ENCODE measurements at regions of chr22 and their contacts with region 1.

Region 1: GRCh38 chr22:37538590-37539357 is 19.6 kb upstream of the CARD10 start:
- DNase-seq: peak; percentile 92
- ATAC-seq: peak; percentile 99
- H3K4me3 ChIP-seq: no peak overlapping the region
- H3K27ac ChIP-seq: no peak overlapping the region
- H3K4me1 ChIP-seq: peaks cover 5% of the 10 kb centered on the region
- H3K27me3 ChIP-seq: no peaks in the 10 kb centered on the region
- CTCF ChIP-seq: peak; percentile 99
- POLR2A ChIP-seq: peak; percentile 66
- RAD21 ChIP-seq: peak; percentile 100

Region 2: GRCh38 chr22:37316875-37317371 is 221.9 kb before region 1 on chr22:
- CTCF ChIA-PET with region 1: no interaction called
- POLR2A ChIA-PET with region 1: no interaction called
- dilution Hi-C with region 1: no loop called
- in situ Hi-C with region 1: no loop called
- intact Hi-C with region 1: loop called (anchors 5 kb)
- DNase-seq: peak; percentile 88
- ATAC-seq: peak; percentile 98
- H3K4me3 ChIP-seq: no peak overlapping the region
- H3K27ac ChIP-seq: no peak overlapping the region
- H3K4me1 ChIP-seq: peaks cover 17% of the 10 kb centered on the region
- H3K27me3 ChIP-seq: no peaks in the 10 kb centered on the region
- CTCF ChIP-seq: peak; percentile 98
- POLR2A ChIP-seq: peak; percentile 68
- RAD21 ChIP-seq: peak; percentile 100

Region 3: GRCh38 chr22:37566903-37567820 is 28.4 kb after region 1 on chr22:
- CTCF ChIA-PET with region 1: interaction called, 7 read pairs
- POLR2A ChIA-PET with region 1: interaction called, 7 read pairs
- dilution Hi-C with region 1: no loop called
- in situ Hi-C with region 1: no loop called
- intact Hi-C with region 1: loop called (anchors 2 kb)
- DNase-seq: peak; percentile 46
- ATAC-seq: no peak
- H3K4me3 ChIP-seq: no peak overlapping the region
- H3K27ac ChIP-seq: no peak overlapping the region
- H3K4me1 ChIP-seq: peaks cover 23% of the 10 kb centered on the region
- H3K27me3 ChIP-seq: no peaks in the 10 kb centered on the region
- CTCF ChIP-seq: peak; percentile 80
- POLR2A ChIP-seq: 0 out of 2 replicates have a peak, but pooled peaks have one; percentile 21
- RAD21 ChIP-seq: peak; percentile 84

Region 4: GRCh38 chr22:37589636-37590035 is 50.9 kb after region 1 on chr22:
- CTCF ChIA-PET with region 1: interaction called, 28 read pairs
- POLR2A ChIA-PET with region 1: no interaction called
- dilution Hi-C with region 1: no loop called
- in situ Hi-C with region 1: no loop called
- intact Hi-C with region 1: loop called (anchors 1 kb)
- DNase-seq: no peak
- ATAC-seq: no peak
- H3K4me3 ChIP-seq: no peak overlapping the region
- H3K27ac ChIP-seq: no peak overlapping the region
- H3K4me1 ChIP-seq: no peaks in the 10 kb centered on the region; the same call in 1 of the 2 replicates
- H3K27me3 ChIP-seq: peaks cover 17% of the 10 kb centered on the region
- CTCF ChIP-seq: no peak
- POLR2A ChIP-seq: no peak
- RAD21 ChIP-seq: no peak

Region 5: DNA sequence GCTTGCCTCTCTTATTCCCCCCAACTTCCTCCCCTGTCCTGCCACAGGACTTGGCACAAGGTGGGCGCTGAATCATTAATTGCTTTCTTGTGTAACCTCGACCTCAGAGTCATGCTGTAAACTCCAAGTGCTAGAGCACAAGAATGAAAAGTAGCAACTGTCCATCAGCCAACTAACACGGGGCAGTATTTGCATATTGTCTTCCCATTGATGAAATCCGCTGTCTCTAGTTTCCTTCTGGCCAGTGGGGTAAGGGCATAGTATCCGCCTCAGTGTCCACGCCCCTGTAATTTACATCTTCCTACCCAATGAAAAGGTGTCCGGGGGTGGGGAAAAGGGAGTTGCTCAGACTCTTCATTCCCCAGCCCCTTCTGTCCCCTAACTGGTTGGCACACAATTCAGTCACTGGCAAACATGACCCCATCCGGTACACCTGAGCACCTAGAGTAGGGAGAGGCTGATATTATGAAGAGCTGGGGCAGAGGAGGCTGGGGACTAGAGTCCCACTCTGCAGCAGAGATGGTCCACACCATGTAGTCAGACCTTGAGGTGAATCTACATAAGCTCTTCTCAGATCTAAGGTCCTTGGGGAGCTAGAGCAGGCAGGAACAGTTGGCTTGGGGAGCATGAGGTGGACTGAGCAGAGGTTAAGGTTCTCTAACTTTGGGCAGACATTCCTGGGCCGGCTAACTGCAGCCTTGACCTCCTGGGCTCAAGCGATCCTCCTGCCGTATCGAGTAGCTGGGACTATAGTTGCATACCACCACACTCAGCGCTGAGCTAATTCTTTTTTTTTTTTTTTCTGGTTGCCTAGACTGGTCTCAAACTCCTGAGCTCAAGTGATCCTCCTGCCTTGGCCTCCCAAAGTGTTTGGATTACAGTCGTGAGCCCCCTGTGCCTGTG is 63.0 kb after region 1 on chr22:
- CTCF ChIA-PET with region 1: interaction called, 3 read pairs
- POLR2A ChIA-PET with region 1: no interaction called
- dilution Hi-C with region 1: no loop called
- in situ Hi-C with region 1: loop called (anchors 5 kb)
- intact Hi-C with region 1: no loop called
- DNase-seq: peak; percentile 33
- ATAC-seq: peak; percentile 83
- H3K4me3 ChIP-seq: no peak overlapping the region
- H3K27ac ChIP-seq: no peak overlapping the region
- H3K4me1 ChIP-seq: no peaks in the 10 kb centered on the region
- H3K27me3 ChIP-seq: peaks cover 11% of the 10 kb centered on the region
- CTCF ChIP-seq: no peak
- POLR2A ChIP-seq: no peak
- RAD21 ChIP-seq: no peak

Region 6: GRCh38 chr22:37752466-37753087 is 213.8 kb after region 1 on chr22:
- CTCF ChIA-PET with region 1: no interaction called
- POLR2A ChIA-PET with region 1: no interaction called
- dilution Hi-C with region 1: no loop called
- in situ Hi-C with region 1: no loop called
- intact Hi-C with region 1: no loop called
- DNase-seq: peak; percentile 85
- ATAC-seq: peak; percentile 83
- H3K4me3 ChIP-seq: no peak overlapping the region
- H3K27ac ChIP-seq: peak overlapping the region; percentile 83
- H3K4me1 ChIP-seq: peaks cover 51% of the 10 kb centered on the region
- H3K27me3 ChIP-seq: no peaks in the 10 kb centered on the region
- CTCF ChIP-seq: peak; percentile 15; the same call in 1 of the 2 replicates
- POLR2A ChIP-seq: no peak
- RAD21 ChIP-seq: peak; percentile 18; the same call in 1 of the 2 replicates

Region 7: GRCh38 chr22:37862570-37863325 is 324.0 kb after region 1 on chr22:
- CTCF ChIA-PET with region 1: no interaction called
- POLR2A ChIA-PET with region 1: no interaction called
- dilution Hi-C with region 1: no loop called
- in situ Hi-C with region 1: no loop called
- intact Hi-C with region 1: loop called (anchors 5 kb)
- DNase-seq: peak; percentile 29
- ATAC-seq: peak; percentile 8; the same call in 1 of the 2 replicates
- H3K4me3 ChIP-seq: no peak overlapping the region
- H3K27ac ChIP-seq: no peak overlapping the region
- H3K4me1 ChIP-seq: peaks cover 5% of the 10 kb centered on the region
- H3K27me3 ChIP-seq: no peaks in the 10 kb centered on the region
- CTCF ChIP-seq: no peak
- POLR2A ChIP-seq: no peak
- RAD21 ChIP-seq: no peak